Heart left ventricle (tissue), 16 donors: ENCODE measurements at regions of chr7 and their contacts with region 1.

Region 1: GRCh38 chr7:132318352-132319318 is 257.6 kb downstream of the PLXNA4 start:
- DNase-seq: peak; percentile 80 to 90 (median 85)
- ATAC-seq: peak; percentile 82 to 93 (median 88)
- H3K4me3 ChIP-seq: no peak overlapping the region
- H3K27ac ChIP-seq: no peak overlapping the region
- H3K4me1 ChIP-seq: peaks cover 0 to 17% (median 7%) of the 10 kb centered on the region in 12 donors
- H3K27me3 ChIP-seq: peaks cover 0 to 7% (median 0%) of the 10 kb centered on the region in 9 donors
- CTCF ChIP-seq: peak; percentile 81 to 94 (median 91)
- POLR2A ChIP-seq: no peak

Region 2: GRCh38 chr7:132145466-132145865 is 173.2 kb before region 1 on chr7:
- intact Hi-C with region 1: no loop called
- DNase-seq: peak in 3 of 5 donors; percentile 20 to 54 (median 51)
- ATAC-seq: peak; percentile 37 to 95 (median 82)
- H3K4me3 ChIP-seq: no peak overlapping the region
- H3K27ac ChIP-seq: no peak overlapping the region
- H3K4me1 ChIP-seq: peaks cover 0 to 18% (median 5%) of the 10 kb centered on the region in 12 donors
- H3K27me3 ChIP-seq: no peaks in the 10 kb centered on the region
- CTCF ChIP-seq: peak in 2 of 12 donors; percentile 10 to 22
- POLR2A ChIP-seq: no peak

Region 3: GRCh38 chr7:132394283-132395198 is 75.9 kb after region 1 on chr7:
- intact Hi-C with region 1: loop called in 3 of 10 experiments (anchors 5 to 10 kb)
- DNase-seq: no peak
- ATAC-seq: peak; percentile 3 to 46 (median 30)
- H3K4me3 ChIP-seq: no peak overlapping the region
- H3K27ac ChIP-seq: peak overlapping the region in 4 of 12 donors; percentile 3 to 58 (median 44)
- H3K4me1 ChIP-seq: peaks cover 0 to 56% (median 20%) of the 10 kb centered on the region in 12 donors
- H3K27me3 ChIP-seq: no peaks in the 10 kb centered on the region
- CTCF ChIP-seq: peak in 10 of 12 donors; percentile 3 to 49 (median 36)
- POLR2A ChIP-seq: no peak

Region 4: DNA sequence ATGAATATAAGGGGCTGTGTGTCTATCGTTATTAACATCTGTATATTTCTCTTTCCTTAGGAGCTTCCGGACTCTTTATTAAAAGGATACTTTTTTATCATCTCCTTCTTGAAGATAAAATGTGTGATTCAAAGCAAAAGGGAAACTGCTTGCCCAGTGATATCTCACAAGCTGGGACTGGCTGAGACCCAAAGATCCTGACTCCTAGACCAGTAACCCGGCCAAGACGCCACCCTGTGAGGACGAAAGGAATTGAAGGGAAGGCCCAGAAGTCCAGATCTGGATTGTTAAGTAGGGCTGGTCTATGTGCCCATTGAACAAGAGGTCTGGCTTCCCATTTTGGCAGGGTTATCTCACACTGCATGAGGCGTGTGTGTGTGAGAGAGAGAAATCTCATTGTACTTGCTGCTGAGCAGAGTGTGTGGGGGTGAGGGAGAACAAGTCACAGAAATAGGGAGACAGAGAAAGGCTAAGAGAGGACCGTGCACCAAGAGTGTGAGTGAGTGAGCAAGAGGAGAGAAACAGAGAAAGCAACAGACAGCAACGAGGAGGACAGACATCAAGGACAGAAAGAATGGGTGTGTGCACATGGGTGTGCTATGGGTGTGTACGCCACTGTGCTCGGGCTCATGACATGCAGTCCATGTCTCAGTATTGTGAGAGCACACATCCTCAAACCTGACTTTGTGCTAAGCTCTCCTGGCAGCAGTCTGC is 182.2 kb after region 1 on chr7:
- intact Hi-C with region 1: loop called (anchors 2 to 10 kb)
- DNase-seq: peak in 4 of 5 donors; percentile 64 to 82 (median 73)
- ATAC-seq: peak; percentile 81 to 92 (median 85)
- H3K4me3 ChIP-seq: no peak overlapping the region
- H3K27ac ChIP-seq: peak overlapping the region in 3 of 12 donors; percentile 0 to 37 (median 34)
- H3K4me1 ChIP-seq: peaks cover 0 to 29% (median 6%) of the 10 kb centered on the region in 12 donors
- H3K27me3 ChIP-seq: no peaks in the 10 kb centered on the region
- CTCF ChIP-seq: peak; percentile 15 to 63 (median 50)
- POLR2A ChIP-seq: no peak

Region 5: DNA sequence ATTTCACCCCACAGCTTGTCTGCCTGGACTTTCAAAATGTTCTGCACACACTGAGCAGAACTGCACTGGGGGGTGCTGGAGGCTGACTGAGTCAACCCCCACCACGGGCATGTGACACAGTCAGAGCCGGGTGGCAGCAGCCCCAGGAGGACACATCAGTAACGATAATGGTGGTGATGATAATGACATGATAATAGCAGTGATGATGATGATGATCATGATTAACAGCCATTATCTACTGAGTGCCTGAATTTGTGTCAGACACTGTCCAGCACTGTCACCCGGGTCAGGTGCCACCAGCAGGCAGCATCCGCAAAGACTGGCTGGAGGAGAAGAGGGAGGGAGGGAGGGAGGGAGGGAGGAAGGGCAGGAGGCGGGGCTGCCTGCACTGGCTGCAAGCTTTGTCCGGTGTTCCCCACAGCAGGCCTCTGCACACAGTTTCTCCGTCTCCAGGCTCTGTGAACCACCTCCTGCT is 190.2 kb after region 1 on chr7:
- intact Hi-C with region 1: loop called in 6 of 10 experiments (anchors 5 to 10 kb)
- DNase-seq: peak in 3 of 5 donors; percentile 40 to 61 (median 54)
- ATAC-seq: peak; percentile 74 to 86 (median 78)
- H3K4me3 ChIP-seq: no peak overlapping the region
- H3K27ac ChIP-seq: peak overlapping the region in 2 of 12 donors; percentile 38 to 45
- H3K4me1 ChIP-seq: peaks cover 0 to 22% (median 6%) of the 10 kb centered on the region in 12 donors
- H3K27me3 ChIP-seq: no peaks in the 10 kb centered on the region
- CTCF ChIP-seq: no peak
- POLR2A ChIP-seq: no peak

Region 6: DNA sequence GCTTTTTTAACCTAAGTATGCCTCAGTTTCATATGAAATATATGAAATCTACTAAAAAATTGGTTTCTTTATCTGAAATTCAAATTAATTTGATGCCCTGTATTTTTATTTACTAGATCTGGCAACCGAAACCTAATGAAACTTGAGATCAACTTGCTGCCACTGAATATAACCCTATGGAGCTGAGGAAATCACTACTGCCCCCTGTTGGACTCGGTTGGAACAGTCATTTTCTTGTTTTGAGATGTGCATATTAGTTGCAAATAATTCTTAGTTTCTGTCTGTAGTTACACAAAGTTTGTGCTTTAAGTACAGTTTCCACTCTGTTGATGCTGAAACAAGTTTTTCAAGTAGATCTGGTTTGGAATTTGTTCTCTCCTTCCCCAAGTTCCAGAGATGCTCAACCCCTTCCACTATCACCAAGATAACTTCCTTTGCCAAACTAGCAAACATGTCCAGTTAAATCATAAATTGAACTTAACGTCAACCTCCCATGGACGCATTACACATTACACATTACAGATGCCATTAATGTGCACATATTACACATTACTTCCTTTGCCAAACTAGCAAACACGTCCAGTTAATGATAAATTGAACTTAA is 912.1 kb after region 1 on chr7:
- intact Hi-C with region 1: loop called in 2 of 10 experiments (anchors 5 to 10 kb)
- DNase-seq: peak in 2 of 5 donors; percentile 20 to 23
- ATAC-seq: no peak
- H3K4me3 ChIP-seq: no peak overlapping the region
- H3K27ac ChIP-seq: no peak overlapping the region
- H3K4me1 ChIP-seq: peaks cover 0 to 7% (median 0%) of the 10 kb centered on the region in 12 donors
- H3K27me3 ChIP-seq: no peaks in the 10 kb centered on the region
- CTCF ChIP-seq: peak; percentile 58 to 82 (median 70)
- POLR2A ChIP-seq: no peak

Region 7: DNA sequence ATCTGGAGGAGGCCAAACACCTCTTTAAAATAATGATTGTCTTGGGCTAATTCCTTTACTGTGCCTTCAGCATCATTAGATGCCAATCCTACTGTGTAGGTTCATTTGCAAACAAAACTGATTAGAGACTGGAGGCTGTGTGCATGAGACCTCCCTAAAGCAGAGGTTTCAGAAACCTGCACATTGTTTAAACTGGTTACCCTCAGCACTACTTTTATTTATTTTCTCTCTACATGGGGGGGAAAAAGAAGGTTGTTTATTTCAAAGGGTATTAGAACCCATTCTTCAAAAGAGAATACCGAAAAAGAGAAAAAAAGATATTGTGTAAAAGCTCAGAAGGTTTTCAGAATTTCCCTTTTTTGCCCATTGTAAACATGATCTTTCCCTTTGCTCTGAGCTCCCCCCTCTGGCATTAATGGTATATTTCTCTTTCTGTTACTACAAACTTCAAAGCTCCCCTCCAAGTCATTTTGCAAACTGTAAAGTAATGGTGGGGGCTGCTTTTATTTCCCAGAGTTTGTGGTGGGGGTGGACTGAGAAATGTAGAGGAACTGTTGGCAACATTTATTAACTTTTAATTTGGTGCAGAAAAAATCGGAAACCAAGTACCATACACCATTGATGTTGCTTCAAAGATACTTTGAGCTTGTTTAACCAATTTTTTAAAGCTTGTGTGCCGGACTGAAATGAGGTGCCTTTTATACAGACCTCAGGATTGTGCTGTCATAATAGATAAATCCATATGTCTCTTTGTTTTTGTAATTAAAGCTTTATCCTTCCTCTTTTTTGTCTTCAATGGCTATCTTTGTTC is 1115.6 kb after region 1 on chr7:
- intact Hi-C with region 1: loop called in 1 of 10 experiments (anchors 10 kb)
- DNase-seq: no peak
- ATAC-seq: peak in 1 of 4 donors; percentile 31
- H3K4me3 ChIP-seq: no peak overlapping the region
- H3K27ac ChIP-seq: no peak overlapping the region
- H3K4me1 ChIP-seq: peaks cover 0 to 19% (median 0%) of the 10 kb centered on the region in 12 donors
- H3K27me3 ChIP-seq: no peaks in the 10 kb centered on the region
- CTCF ChIP-seq: peak in 11 of 12 donors; percentile 20 to 59 (median 45)
- POLR2A ChIP-seq: no peak

Region 8: GRCh38 chr7:134016223-134016941 is 1697.7 kb after region 1 on chr7:
- intact Hi-C with region 1: loop called in 2 of 10 experiments (anchors 10 kb)
- DNase-seq: peak in 2 of 5 donors; percentile 18 to 29
- ATAC-seq: peak in 3 of 4 donors; percentile 48 to 69 (median 56)
- H3K4me3 ChIP-seq: no peak overlapping the region
- H3K27ac ChIP-seq: no peak overlapping the region
- H3K4me1 ChIP-seq: peaks cover 0 to 4% (median 0%) of the 10 kb centered on the region in 12 donors
- H3K27me3 ChIP-seq: no peaks in the 10 kb centered on the region
- CTCF ChIP-seq: peak; percentile 45 to 77 (median 72)
- POLR2A ChIP-seq: no peak